ENCODE measurements at regions of chr1 and their contacts with region 1.

Region 1: GRCh38 chr1:54944610-54945544 is 35.6 kb upstream of the TMEM61 start:
- DNase-seq: peak; percentile 79
- H3K4me3 Mint-ChIP-seq: no peak overlapping the region
- H3K27ac Mint-ChIP-seq: no peak overlapping the region
- H3K4me1 Mint-ChIP-seq: peaks cover 9% of the 10 kb centered on the region
- H3K27me3 Mint-ChIP-seq: peaks cover 39% of the 10 kb centered on the region

Region 2: DNA sequence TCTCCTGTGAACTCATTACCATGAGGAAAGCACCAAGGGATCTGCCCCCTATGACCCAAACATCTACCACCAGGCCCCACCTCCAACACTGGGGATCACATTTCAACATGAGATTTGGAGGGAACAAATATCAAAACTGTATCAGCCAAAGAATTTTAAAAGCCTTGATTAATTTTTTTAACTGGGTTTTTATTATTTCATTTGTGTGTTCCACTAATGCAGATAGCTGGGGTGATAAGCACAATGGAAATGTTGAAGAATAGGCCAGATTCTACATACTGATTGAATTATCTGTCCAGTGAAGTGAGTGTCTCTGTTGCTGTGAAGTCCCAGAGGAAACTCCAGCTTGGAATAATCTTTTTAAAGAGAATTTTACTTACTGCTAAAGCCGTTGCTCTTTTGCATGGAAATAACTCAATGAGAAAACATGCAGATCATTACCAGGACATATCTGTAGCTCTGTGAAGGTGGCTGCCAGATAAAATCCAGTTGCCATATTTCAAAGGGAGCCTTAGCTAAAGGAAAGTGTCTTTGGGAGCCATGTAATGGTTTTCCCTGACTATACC is 13.5 kb before region 1 on chr1:
- CTCF ChIA-PET with region 1: interaction called, 14 read pairs
- DNase-seq: no peak
- H3K4me3 Mint-ChIP-seq: no peak overlapping the region
- H3K27ac Mint-ChIP-seq: no peak overlapping the region
- H3K4me1 Mint-ChIP-seq: no peaks in the 10 kb centered on the region
- H3K27me3 Mint-ChIP-seq: peaks cover 24% of the 10 kb centered on the region

Region 3: GRCh38 chr1:54987919-54988705 is 43.2 kb after region 1 on chr1:
- CTCF ChIA-PET with region 1: interaction called, 23 read pairs
- DNase-seq: no peak
- H3K4me3 Mint-ChIP-seq: no peak overlapping the region
- H3K27ac Mint-ChIP-seq: no peak overlapping the region
- H3K4me1 Mint-ChIP-seq: no peaks in the 10 kb centered on the region
- H3K27me3 Mint-ChIP-seq: peaks cover 26% of the 10 kb centered on the region

Region 4: GRCh38 chr1:55015731-55016620 is 71.1 kb after region 1 on chr1:
- CTCF ChIA-PET with region 1: interaction called, 50 read pairs
- DNase-seq: no peak
- H3K4me3 Mint-ChIP-seq: no peak overlapping the region
- H3K27ac Mint-ChIP-seq: no peak overlapping the region
- H3K4me1 Mint-ChIP-seq: no peaks in the 10 kb centered on the region
- H3K27me3 Mint-ChIP-seq: peaks cover 53% of the 10 kb centered on the region

Region 5: GRCh38 chr1:55033265-55033614 is 88.4 kb after region 1 on chr1:
- CTCF ChIA-PET with region 1: interaction called, 10 read pairs
- DNase-seq: no peak
- H3K4me3 Mint-ChIP-seq: no peak overlapping the region
- H3K27ac Mint-ChIP-seq: no peak overlapping the region
- H3K4me1 Mint-ChIP-seq: no peaks in the 10 kb centered on the region
- H3K27me3 Mint-ChIP-seq: peaks cover 45% of the 10 kb centered on the region

Measured in activated naive CD4-positive, alpha-beta T cell treated with anti-CD3 and anti-CD28 coated beads, Interleukin-2, amount 10 ng/mL, durations not matched to agents 7 days and 5 days (primary cell).